Panc1 (cell line): ENCODE measurements at regions of chr16 and their contacts with region 1.

Region 1: GRCh38 chr16:85821441-85822135 is 22.1 kb downstream of the COX4I1 start:
- DNase-seq: no peak
- ATAC-seq: peak; percentile 89
- H3K4me3 ChIP-seq: no peak overlapping the region
- H3K27ac ChIP-seq: no peak overlapping the region
- H3K4me1 ChIP-seq: no peaks in the 10 kb centered on the region
- H3K27me3 ChIP-seq: no peaks in the 10 kb centered on the region
- CTCF ChIP-seq: peak; percentile 93

Region 2: DNA sequence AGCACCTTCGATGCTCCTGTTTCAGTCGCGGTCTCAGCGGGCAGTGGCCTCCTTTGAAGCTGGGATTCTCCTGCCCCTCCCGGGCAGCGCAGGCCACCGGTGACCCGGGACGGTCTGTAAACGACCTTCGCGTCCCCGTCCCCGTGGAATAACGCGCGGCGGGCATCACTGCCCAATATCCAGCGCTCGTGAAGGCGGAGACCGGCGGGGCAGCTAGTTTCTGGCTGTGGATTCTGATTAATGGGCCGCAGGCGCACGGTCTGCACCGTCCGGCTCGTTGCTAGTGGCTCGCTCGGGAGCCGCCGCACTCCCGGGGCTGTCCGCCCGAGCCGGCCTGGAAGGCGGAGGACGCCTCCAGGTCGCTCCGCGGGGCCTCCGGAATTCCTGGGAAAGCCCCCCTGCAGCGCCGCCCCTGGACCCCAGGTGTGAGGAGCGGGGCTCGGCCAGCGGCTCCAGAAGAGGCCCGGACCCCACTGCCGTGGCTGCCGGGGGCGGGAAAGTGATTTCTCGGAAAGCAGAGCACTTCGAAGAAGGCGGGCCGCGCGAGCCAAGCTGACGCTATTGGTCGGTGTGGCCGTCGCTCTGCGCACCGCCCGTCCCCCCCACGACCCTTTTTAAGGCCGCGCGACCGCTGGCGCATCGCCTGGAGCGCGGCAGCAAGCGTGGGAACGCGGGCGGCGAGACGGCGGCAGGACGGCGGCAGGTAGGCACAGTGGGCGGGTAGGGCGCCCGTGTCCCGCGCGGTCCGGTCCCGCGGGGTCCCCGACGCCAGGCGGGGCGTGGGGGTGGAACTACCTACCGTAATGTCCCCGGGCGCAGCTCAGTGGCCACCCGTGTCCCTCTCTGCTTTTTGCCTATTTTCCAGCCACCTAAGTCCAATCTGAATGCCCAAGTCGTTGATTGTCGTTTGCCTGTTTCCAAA is 77.2 kb after region 1 on chr16 and contains the start of gene IRF8:
- CTCF ChIA-PET with region 1: no interaction called
- POLR2A ChIA-PET with region 1: no interaction called
- in situ Hi-C with region 1: no loop called
- intact Hi-C with region 1: loop called (anchors 10 kb)
- DNase-seq: no peak
- ATAC-seq: peak; percentile 91
- H3K4me3 ChIP-seq: peak within 1 kb of the TSS; percentile 30 to 37
- H3K27ac ChIP-seq: no peak within 1 kb of the TSS
- H3K4me1 ChIP-seq: no peaks in the 10 kb centered on the region
- H3K27me3 ChIP-seq: peaks cover 18% of the 10 kb centered on the region
- CTCF ChIP-seq: no peak
- total RNA-seq, gene IRF8: 0.62 TPM

Region 3: GRCh38 chr16:85935974-85936760 is 114.6 kb after region 1 on chr16:
- CTCF ChIA-PET with region 1: no interaction called
- POLR2A ChIA-PET with region 1: no interaction called
- in situ Hi-C with region 1: no loop called
- intact Hi-C with region 1: no loop called
- DNase-seq: no peak
- ATAC-seq: no peak
- H3K4me3 ChIP-seq: no peak overlapping the region
- H3K27ac ChIP-seq: no peak overlapping the region
- H3K4me1 ChIP-seq: no peaks in the 10 kb centered on the region
- H3K27me3 ChIP-seq: peaks cover 2% of the 10 kb centered on the region; the same call in 1 of the 2 replicates
- CTCF ChIP-seq: no peak

Region 4: DNA sequence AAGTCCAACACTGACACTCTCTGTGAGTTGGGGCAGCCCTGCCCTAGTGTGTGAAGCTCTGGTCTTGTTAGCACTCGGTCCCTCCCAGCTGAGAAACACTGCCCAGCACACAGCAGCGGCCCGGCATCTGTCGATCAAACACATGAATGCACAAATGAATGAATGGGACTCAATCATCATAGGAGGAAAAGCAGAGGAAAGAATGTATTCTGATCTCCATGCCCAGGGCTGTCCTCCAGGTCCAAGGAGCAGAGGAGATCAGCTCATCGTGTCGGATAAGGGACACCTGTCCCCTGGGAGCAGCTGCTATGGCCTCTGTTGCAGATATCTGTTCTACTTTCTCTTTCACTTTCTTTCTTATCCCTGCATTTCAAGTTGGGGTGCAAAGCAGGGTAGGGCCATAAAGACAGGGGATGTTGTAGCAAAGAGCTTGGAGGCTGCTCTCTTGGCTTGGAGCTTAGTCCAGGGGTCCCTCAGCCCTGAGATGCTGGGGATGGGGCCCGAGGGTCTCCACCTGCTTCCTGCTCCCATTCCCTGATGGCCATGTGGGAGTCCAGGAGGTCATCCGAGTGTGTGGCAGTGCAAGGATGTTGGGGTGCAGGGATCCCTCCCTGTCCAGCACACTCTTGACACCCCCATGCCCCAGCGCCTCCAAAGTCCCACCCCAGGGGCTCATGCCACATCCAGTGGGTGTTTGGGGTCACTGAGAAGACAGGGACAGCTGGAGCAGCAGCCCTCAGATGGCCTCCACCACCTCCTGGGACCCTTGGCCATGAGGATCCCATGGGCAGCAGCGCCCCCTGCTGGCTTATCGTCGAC is 165.6 kb after region 1 on chr16:
- CTCF ChIA-PET with region 1: interaction called, 13 read pairs
- POLR2A ChIA-PET with region 1: no interaction called
- in situ Hi-C with region 1: no loop called
- intact Hi-C with region 1: loop called (anchors 2 kb)
- DNase-seq: no peak
- ATAC-seq: peak; percentile 70
- H3K4me3 ChIP-seq: peak overlapping the region; percentile 29 to 42
- H3K27ac ChIP-seq: no peak overlapping the region
- H3K4me1 ChIP-seq: no peaks in the 10 kb centered on the region
- H3K27me3 ChIP-seq: peaks cover 2% of the 10 kb centered on the region; the same call in 1 of the 2 replicates
- CTCF ChIP-seq: peak; percentile 65; the same call in 1 of the 2 replicates

Region 5: GRCh38 chr16:86016201-86016871 is 194.7 kb after region 1 on chr16:
- CTCF ChIA-PET with region 1: interaction called, 6 read pairs
- POLR2A ChIA-PET with region 1: no interaction called
- in situ Hi-C with region 1: no loop called
- intact Hi-C with region 1: loop called (anchors 1 kb)
- DNase-seq: peak; percentile 25
- ATAC-seq: peak; percentile 83
- H3K4me3 ChIP-seq: no peak overlapping the region
- H3K27ac ChIP-seq: no peak overlapping the region
- H3K4me1 ChIP-seq: no peaks in the 10 kb centered on the region
- H3K27me3 ChIP-seq: peaks cover 7% of the 10 kb centered on the region
- CTCF ChIP-seq: peak; percentile 80